PC-9 (cell line): ENCODE measurements at regions of chr2 and their contacts with region 1.

Region 1: DNA sequence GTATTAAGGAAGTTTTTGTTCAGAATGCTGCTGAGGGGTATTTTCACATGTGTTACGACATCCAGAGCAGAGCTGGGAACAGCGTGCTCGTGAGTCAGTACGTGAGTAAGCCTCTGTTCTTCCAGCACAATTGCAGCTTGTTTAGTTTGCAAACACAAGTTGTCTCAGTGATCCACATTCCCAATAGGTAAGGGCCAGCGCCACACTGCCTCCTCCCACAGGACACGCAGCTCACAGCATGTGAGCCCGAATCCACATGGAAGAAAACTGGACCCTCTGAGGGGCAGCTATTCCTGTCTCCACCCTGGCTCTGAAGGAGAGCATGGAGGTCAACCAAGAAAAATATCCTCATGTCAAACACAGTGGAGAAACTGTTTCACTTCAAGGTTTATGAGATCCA is 173.9 kb upstream of the PID1 start:
- DNase-seq: peak; percentile 56 to 92
- H3K4me3 ChIP-seq: peak overlapping the region; percentile 12; the same call in 1 of the 2 replicates
- H3K27ac ChIP-seq: peak overlapping the region; percentile 84
- H3K4me1 ChIP-seq: peaks cover 17% of the 10 kb centered on the region
- H3K27me3 ChIP-seq: no peaks in the 10 kb centered on the region
- CTCF ChIP-seq: no peak

Region 2: GRCh38 chr2:229489016-229489415 is 44.0 kb after region 1 on chr2:
- CTCF ChIA-PET with region 1: no interaction called
- POLR2A ChIA-PET with region 1: no interaction called
- intact Hi-C with region 1: loop called (anchors 2 kb)
- DNase-seq: peak; percentile 83 to 98
- H3K4me3 ChIP-seq: peak overlapping the region; percentile 31; the same call in 1 of the 2 replicates
- H3K27ac ChIP-seq: no peak overlapping the region
- H3K4me1 ChIP-seq: peaks cover 17% of the 10 kb centered on the region
- H3K27me3 ChIP-seq: no peaks in the 10 kb centered on the region
- CTCF ChIP-seq: no peak

Region 3: DNA sequence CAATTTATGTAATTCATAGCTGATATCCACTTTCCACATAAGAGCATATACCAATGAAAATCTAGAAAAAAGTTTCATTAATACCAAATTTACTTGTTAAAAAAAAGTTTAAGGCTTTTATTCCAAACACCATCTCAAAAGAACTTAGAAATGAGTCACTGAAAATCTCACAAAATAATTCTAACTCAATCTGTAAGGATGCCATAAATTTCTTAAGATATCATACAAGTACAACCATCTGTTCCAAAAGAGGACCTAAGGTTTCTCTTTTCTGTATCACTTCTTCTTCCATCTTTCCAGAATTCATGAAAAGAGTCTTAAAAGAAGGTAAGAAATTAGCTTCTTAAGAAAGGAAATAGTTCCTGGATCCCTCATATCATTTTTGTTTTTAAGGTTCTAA is 416.4 kb after region 1 on chr2:
- CTCF ChIA-PET with region 1: no interaction called
- POLR2A ChIA-PET with region 1: no interaction called
- intact Hi-C with region 1: loop called (anchors 5 kb)
- DNase-seq: no peak
- H3K4me3 ChIP-seq: no peak overlapping the region
- H3K27ac ChIP-seq: no peak overlapping the region
- H3K4me1 ChIP-seq: no peaks in the 10 kb centered on the region; the same call in 1 of the 2 replicates
- H3K27me3 ChIP-seq: no peaks in the 10 kb centered on the region
- CTCF ChIP-seq: no peak